Panc1 (cell line): ENCODE measurements at regions of chr7 and their contacts with region 1.

Region 1: GRCh38 chr7:35985126-35985754 is 167.8 kb upstream of the EEPD1 start:
- DNase-seq: no peak
- ATAC-seq: peak; percentile 94
- H3K4me3 ChIP-seq: no peak overlapping the region
- H3K27ac ChIP-seq: peak overlapping the region; percentile 29
- H3K4me1 ChIP-seq: peaks cover 13% of the 10 kb centered on the region
- H3K27me3 ChIP-seq: no peaks in the 10 kb centered on the region
- CTCF ChIP-seq: peak; percentile 98

Region 2: DNA sequence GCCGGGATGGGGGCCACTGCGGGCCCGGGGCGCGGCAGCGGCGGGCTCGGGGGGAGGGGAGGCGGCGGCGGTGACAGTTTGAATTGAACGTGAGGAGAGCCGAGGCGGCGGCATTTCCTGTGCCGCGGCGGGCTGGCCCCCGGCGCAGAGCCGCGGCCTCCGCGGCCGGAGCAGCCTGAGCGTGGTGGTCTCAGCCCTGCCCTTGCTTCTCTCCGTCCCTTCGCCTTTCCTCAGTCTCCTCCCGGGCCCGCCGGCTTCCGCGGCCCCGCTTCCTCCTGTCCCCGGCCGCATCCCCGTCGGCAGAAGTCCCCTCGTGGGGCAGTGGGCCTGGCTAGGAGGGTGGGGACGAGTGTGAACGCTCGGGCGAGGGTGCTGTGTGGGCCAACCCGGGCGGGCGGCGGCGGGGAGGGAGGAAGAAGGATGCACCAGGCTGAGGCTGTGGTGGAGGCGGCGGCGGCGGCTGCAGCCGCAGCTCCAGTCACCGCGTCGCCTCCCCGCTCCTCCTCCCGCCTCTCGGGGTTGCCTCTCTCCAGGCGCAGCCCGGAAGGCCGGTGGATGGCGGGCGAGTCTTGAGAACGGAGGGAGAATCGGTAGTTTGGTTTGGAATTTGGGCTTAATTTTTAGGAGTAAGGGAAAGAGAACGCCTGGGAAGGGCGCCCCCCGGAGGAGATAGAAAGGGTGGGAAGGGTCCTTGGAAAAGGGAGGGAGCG is 183.7 kb before region 1 on chr7:
- CTCF ChIA-PET with region 1: no interaction called
- POLR2A ChIA-PET with region 1: no interaction called
- in situ Hi-C with region 1: no loop called
- intact Hi-C with region 1: no loop called
- DNase-seq: peak; percentile 17
- ATAC-seq: peak; percentile 65
- H3K4me3 ChIP-seq: peak overlapping the region; percentile 79 to 94
- H3K27ac ChIP-seq: peak overlapping the region; percentile 99
- H3K4me1 ChIP-seq: peaks cover 44% of the 10 kb centered on the region
- H3K27me3 ChIP-seq: no peaks in the 10 kb centered on the region
- CTCF ChIP-seq: peak; percentile 95

Region 3: DNA sequence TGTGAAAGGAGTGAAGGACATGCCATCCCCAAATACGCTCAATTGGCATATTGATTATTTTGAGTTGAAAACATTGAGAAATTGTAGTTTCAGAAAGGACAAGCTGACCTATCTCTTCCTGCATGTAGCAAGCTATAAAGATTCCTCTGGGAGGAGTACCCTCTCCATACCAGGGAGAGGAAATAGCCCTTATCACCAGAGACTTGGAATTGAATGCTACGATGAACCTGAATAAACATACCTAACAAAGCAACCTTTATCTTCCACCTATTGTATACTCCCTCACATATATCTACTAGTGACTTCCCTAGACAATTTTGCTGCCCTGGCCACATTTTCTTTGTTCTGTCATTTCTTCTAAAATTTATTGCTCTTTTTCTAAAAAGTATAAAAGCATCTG is 17.7 kb after region 1 on chr7:
- CTCF ChIA-PET with region 1: no interaction called
- POLR2A ChIA-PET with region 1: no interaction called
- in situ Hi-C with region 1: no loop called
- intact Hi-C with region 1: no loop called
- DNase-seq: no peak
- ATAC-seq: no peak
- H3K4me3 ChIP-seq: no peak overlapping the region
- H3K27ac ChIP-seq: no peak overlapping the region
- H3K4me1 ChIP-seq: no peaks in the 10 kb centered on the region
- H3K27me3 ChIP-seq: no peaks in the 10 kb centered on the region
- CTCF ChIP-seq: no peak

Region 4: GRCh38 chr7:36128448-36129047 is 143.3 kb after region 1 on chr7:
- CTCF ChIA-PET with region 1: interaction called, 3 read pairs
- POLR2A ChIA-PET with region 1: no interaction called
- in situ Hi-C with region 1: loop called (anchors 25 kb)
- intact Hi-C with region 1: loop called (anchors 5 kb)
- DNase-seq: peak; percentile 89
- ATAC-seq: peak; percentile 95
- H3K4me3 ChIP-seq: peak overlapping the region; percentile 19 to 57
- H3K27ac ChIP-seq: peak overlapping the region; percentile 78
- H3K4me1 ChIP-seq: peaks cover 25% of the 10 kb centered on the region
- H3K27me3 ChIP-seq: no peaks in the 10 kb centered on the region
- CTCF ChIP-seq: peak; percentile 86

Region 5: GRCh38 chr7:36182854-36183604 is 197.8 kb after region 1 on chr7:
- CTCF ChIA-PET with region 1: interaction called, 12 read pairs
- POLR2A ChIA-PET with region 1: no interaction called
- in situ Hi-C with region 1: no loop called
- intact Hi-C with region 1: no loop called
- DNase-seq: no peak
- ATAC-seq: peak; percentile 47
- H3K4me3 ChIP-seq: no peak overlapping the region
- H3K27ac ChIP-seq: peak overlapping the region; percentile 60
- H3K4me1 ChIP-seq: peaks cover 60% of the 10 kb centered on the region
- H3K27me3 ChIP-seq: no peaks in the 10 kb centered on the region
- CTCF ChIP-seq: no peak

Region 6: DNA sequence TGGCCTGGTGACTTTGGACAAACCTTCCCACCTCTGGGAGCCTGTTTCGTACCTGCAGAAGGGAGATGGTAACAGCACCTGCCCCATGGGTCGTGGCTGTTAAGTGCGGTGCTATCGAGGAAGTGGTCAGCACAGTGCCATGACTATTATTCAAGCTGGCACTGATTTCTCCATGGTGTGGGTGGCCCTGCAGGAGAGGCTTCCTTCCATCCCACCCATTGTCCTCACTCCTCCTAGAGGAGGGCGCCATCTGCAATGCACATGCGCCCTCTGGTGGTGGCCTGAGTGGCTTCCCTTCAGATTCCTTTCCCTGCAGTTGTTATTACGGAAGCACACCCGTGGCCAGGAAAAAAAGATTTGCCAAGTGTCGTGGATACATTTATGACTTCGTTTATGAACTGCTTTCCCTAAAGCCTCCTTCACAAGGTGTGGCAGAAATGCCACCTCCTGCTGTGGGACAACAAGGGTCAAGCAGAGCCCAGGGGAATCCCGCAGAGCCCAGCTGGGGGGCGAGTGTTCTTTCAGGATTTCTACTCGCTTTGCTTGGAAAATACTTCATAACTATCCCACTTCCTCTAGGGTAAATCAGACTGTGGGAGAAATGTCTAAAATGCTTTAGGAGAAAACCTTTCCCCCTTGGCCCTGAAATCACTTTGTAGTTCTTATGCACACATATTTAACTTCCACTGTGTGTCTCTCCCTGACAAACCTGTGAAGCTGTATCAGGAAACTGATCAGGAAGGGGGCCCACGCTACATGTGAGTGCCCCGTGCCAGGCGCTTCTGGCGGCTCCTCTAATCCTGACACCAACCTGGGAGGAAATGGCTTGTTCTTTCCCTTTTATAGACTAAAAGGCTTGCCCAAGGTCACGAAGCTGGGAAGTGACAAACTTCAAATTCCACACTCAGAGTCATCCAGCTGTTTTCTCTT is 306.4 kb after region 1 on chr7:
- CTCF ChIA-PET with region 1: interaction called, 9 read pairs
- POLR2A ChIA-PET with region 1: no interaction called
- in situ Hi-C with region 1: no loop called
- intact Hi-C with region 1: loop called (anchors 1 kb)
- DNase-seq: peak; percentile 82
- ATAC-seq: peak; percentile 82
- H3K4me3 ChIP-seq: peak overlapping the region; percentile 3 to 15; a peak in 2 of 4 replicates
- H3K27ac ChIP-seq: peak overlapping the region; percentile 99
- H3K4me1 ChIP-seq: peaks cover 55% of the 10 kb centered on the region
- H3K27me3 ChIP-seq: no peaks in the 10 kb centered on the region
- CTCF ChIP-seq: peak; percentile 97

Region 7: GRCh38 chr7:36318116-36318515 is 332.9 kb after region 1 on chr7:
- CTCF ChIA-PET with region 1: interaction called, 9 read pairs
- POLR2A ChIA-PET with region 1: no interaction called
- in situ Hi-C with region 1: loop called (anchors 25 kb)
- intact Hi-C with region 1: loop called (anchors 2 kb)
- DNase-seq: no peak
- ATAC-seq: no peak
- H3K4me3 ChIP-seq: no peak overlapping the region
- H3K27ac ChIP-seq: peak overlapping the region; percentile 32; the same call in 1 of the 2 replicates
- H3K4me1 ChIP-seq: peaks cover 7% of the 10 kb centered on the region
- H3K27me3 ChIP-seq: no peaks in the 10 kb centered on the region
- CTCF ChIP-seq: no peak